ENCODE measurements at regions of chr4 and their contacts with region 1.

Region 1: GRCh38 chr4:16289897-16290554 is 63.8 kb upstream of the TAPT1 start:
- DNase-seq: no peak

Region 2: GRCh38 chr4:16043642-16044498 is 246.2 kb before region 1 on chr4:
- intact Hi-C with region 1: no loop called
- DNase-seq: no peak

Region 3: DNA sequence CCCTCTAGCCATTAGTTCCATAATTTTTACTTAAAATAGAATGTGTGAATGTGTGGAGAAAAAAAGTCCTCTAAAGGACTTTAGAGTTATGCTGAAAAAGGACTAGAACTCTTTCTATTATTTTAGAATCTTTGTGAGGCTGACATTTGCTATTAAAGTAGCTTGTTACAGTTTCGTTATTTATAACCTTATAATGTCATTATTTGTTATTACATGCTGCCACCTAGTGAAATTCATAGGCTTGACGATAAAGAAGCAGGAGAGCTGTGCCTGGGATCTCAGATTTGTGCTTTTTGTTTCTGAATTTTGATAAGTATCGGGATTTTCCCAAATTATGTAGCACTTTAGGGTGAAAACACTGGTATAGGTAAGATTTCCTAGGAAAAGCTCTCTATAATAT is 25.2 kb before region 1 on chr4:
- intact Hi-C with region 1: no loop called
- DNase-seq: no peak

Region 4: DNA sequence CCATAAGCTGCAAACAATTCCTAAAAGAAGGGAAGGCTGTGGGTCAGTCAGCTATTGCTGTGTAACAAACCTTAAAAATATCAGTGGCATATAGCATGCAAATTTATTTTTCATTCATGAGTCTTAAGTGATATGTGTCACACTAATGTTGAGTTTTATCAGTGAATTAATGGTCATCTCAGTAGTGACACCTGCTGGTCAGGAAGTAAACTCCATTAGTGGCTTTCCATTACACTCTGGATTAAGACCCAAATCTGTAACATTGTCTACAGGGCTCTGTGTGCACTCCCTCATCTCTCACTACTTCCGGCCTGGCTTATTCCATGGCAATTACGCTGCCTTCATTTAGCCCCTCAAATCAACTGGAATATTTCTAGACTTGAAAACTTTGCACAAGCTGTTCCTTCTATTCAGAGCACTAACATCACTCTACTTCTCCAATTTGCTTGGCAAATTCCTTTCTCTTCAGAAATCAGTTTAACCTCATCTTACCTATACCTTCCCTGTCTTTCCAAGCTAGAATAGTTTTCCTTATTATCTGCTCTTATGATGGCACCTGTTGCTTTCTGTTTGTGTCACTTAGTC is 153.6 kb after region 1 on chr4:
- intact Hi-C with region 1: loop called (anchors 2 kb)
- DNase-seq: no peak

Region 5: DNA sequence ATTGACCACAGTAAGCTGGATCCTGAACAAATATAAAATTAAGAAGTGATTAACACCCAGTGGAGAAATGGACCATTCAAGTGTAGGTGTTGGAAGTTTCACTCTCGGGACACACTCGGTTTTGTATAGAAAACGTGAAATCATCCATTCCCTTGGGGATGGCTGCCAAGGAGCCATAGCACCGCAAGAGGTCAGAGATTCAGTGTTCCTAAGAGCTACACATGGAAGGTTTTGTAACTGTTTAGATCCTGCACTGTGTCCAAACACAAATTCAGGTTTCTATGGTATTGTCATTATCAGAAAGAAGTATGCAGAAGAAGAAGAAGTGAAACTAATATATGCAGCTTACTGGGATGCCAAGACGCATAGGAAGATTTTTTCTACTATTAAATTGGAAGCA is 327.4 kb after region 1 on chr4:
- intact Hi-C with region 1: no loop called
- DNase-seq: no peak

Region 6: GRCh38 chr4:17112292-17112659 is 822.2 kb after region 1 on chr4:
- intact Hi-C with region 1: loop called (anchors 5 kb)
- DNase-seq: peak in 2 of 10 donors; percentile 19 to 30

Region 7: DNA sequence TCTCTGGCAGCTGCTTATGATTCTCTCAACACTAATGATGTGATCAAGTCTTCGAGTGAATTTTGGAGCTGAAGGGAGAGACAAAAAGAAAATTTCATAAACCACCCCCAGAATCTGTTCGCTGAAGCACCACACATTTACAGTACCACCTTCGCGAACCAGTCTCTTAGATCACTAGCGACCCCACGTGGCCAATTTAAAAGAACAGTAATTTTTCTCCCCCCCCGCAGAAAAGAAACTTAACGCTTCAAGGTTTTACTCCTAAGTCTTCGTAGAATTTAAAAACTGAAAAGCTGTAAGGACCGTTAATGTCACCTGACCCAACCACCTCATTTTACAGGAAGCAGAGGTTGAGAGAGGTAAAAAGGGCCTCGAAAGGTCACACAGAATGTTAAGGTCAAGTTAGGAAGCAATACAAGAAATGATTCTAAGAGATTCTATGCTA is 1034.4 kb after region 1 on chr4:
- intact Hi-C with region 1: loop called (anchors 5 kb)
- DNase-seq: peak in 5 of 10 donors; percentile 31 to 82 (median 54)

Region 8: DNA sequence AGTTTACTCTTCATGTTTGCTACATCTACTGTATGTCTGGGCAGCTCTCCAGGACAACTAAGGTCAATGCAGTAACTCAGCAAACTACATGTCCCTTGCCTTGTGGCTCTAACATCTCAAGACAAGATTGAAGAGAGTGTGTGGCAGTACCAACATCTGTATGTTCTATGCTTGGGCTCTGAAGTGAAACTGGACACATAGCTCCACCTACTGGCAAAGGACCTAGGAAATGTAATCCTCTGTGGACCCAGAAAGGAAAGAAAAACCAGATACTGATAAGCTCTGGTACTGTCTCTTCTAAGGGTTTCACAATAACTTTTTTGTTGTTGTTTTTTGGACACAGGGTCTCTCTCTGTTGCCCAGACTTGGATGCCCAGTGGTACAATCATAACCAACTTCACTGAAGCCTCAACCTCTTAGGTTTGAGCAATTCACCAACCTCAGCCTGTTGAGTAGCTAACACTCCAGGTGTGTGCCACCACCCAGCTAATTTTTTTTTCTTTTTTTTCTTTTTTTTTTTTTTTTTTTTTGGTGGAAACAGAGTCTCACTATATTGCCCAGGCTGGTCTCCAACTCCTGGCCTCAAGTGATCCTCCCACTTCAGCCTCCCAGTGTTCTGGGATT is 1157.8 kb after region 1 on chr4:
- intact Hi-C with region 1: loop called (anchors 5 kb)
- DNase-seq: peak in 3 of 10 donors; percentile 44 to 55 (median 48)

Region 9: DNA sequence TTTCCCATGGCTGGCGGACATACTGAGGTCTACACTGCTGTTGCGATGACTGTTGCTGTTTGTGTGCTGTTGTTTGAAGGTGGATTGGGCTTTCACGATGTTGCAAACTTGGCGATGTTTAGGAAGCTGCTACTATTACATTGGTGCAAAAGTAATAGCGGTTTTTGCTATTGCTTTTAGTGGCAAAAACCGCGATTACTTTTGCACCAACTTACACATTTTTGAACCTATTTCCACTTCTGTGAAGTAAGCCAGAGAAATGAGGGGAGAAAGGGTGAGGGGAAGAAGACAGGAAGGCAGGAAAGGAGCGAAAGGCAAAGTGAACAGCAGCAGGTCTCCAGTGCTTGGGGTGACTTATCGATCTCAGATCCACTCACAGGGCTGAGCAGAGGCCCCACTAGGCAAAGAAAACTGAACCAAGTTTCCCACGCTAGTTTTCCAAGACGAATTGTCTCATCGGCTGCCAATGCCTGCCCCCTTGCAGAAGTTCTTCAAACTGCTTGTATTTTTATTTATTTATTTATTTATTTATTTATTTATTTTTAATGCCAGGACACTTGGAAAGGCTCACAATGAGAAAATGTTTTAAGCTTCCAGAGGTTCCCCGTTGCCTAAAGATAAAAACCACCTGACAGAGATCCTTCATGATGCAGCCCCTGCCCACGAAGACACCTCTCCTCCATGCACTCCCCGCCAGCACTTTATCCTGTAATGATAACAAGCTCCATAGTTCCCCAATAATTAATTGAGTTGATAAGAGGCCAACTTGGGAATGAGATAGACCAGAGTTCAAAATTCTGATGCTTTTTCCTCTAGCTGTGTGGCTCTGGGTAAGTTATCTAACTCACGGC is 1178.6 kb after region 1 on chr4:
- intact Hi-C with region 1: loop called (anchors 5 kb)
- DNase-seq: peak in 3 of 10 donors; percentile 17 to 89 (median 30)